ENCODE measurements at regions of chr7 and their contacts with region 1.

Region 1: GRCh38 chr7:73865738-73866445 is 4.9 kb downstream of the TMEM270 start:
- DNase-seq: peak in 3 of 4 experiments; percentile 53 to 71 (median 61)
- ATAC-seq: peak; percentile 83
- H3K4me3 ChIP-seq: no peak overlapping the region
- H3K27ac ChIP-seq: no peak overlapping the region
- H3K4me1 ChIP-seq: peaks cover 0 to 16% of the 10 kb centered on the region in 2 experiments; a peak in 3 of 5 replicates
- H3K27me3 ChIP-seq: peaks cover 9 to 51% of the 10 kb centered on the region in 2 experiments; a peak in 3 of 5 replicates
- CTCF ChIP-seq: peak; percentile 72 to 94 (median 79)
- EP300 ChIP-seq: no peak
- POLR2A ChIP-seq: no peak
- RAD21 ChIP-seq: peak; percentile 84

Region 2: GRCh38 chr7:73879977-73880681 is 14.2 kb after region 1 on chr7:
- CTCF ChIA-PET with region 1: interaction called, 3 read pairs
- POLR2A ChIA-PET with region 1: interaction called, 15 read pairs
- in situ Hi-C with region 1: no loop called
- intact Hi-C with region 1: no loop called
- DNase-seq: no peak
- ATAC-seq: peak; percentile 50
- H3K4me3 ChIP-seq: no peak overlapping the region
- H3K27ac ChIP-seq: no peak overlapping the region
- H3K4me1 ChIP-seq: peaks cover 0 to 9% of the 10 kb centered on the region in 2 experiments; a peak in 1 of 5 replicates
- H3K27me3 ChIP-seq: peaks cover 21 to 63% of the 10 kb centered on the region in 2 experiments
- CTCF ChIP-seq: no peak
- EP300 ChIP-seq: no peak
- POLR2A ChIP-seq: no peak
- RAD21 ChIP-seq: no peak

Region 3: GRCh38 chr7:73978661-73979563 is 113.0 kb after region 1 on chr7:
- CTCF ChIA-PET with region 1: interaction called, 5 read pairs
- POLR2A ChIA-PET with region 1: no interaction called
- in situ Hi-C with region 1: no loop called
- intact Hi-C with region 1: loop called (anchors 1 kb)
- DNase-seq: peak; percentile 64 to 76 (median 74)
- ATAC-seq: peak; percentile 90
- H3K4me3 ChIP-seq: no peak overlapping the region
- H3K27ac ChIP-seq: no peak overlapping the region
- H3K4me1 ChIP-seq: peaks cover 2 to 10% of the 10 kb centered on the region in 2 experiments; a peak in 3 of 5 replicates
- H3K27me3 ChIP-seq: peaks cover 36 to 77% of the 10 kb centered on the region in 2 experiments
- CTCF ChIP-seq: peak; percentile 69 to 81 (median 70)
- EP300 ChIP-seq: no peak
- POLR2A ChIP-seq: no peak
- RAD21 ChIP-seq: peak; percentile 52 to 69

Region 4: GRCh38 chr7:74017125-74017524 is 151.2 kb after region 1 on chr7:
- CTCF ChIA-PET with region 1: no interaction called
- POLR2A ChIA-PET with region 1: no interaction called
- in situ Hi-C with region 1: no loop called
- intact Hi-C with region 1: loop called (anchors 5 kb)
- DNase-seq: no peak
- ATAC-seq: no peak
- H3K4me3 ChIP-seq: no peak overlapping the region
- H3K27ac ChIP-seq: no peak overlapping the region
- H3K4me1 ChIP-seq: peaks cover 0 to 19% of the 10 kb centered on the region in 2 experiments; a peak in 2 of 5 replicates
- H3K27me3 ChIP-seq: peaks cover 25 to 71% of the 10 kb centered on the region in 2 experiments
- CTCF ChIP-seq: no peak
- EP300 ChIP-seq: no peak
- POLR2A ChIP-seq: no peak
- RAD21 ChIP-seq: no peak

Region 5: DNA sequence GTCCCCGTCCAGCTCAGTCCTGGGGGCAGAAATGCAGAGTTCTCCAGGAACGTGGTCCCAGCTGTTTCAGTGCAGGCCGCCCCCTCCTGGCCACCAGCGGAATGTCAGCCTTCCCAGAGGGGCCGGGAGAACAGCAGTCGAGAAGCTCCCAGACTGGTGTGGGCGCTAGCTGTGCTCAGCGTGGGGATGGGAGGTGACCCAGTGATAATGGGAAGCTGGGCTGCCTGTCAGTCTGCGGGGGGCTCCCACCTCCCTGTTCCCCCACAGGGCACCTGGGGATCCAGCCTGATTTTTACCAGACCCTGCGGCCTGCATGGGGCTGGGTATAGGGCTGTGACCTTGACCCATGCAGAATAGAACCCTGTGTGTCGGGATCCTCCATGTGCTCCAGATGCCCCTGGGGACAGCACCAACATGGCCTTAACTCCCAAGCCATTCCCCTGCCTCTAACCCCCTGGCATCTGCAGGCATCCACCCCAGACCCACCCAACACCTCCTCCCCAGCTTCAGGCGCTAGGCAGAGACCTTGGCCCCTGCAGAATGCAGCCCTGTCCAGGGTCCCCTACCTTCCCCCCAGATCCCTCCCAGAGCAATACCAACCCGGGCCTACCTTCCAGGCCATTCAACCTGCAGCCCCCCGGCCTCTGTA is 161.1 kb after region 1 on chr7:
- CTCF ChIA-PET with region 1: interaction called, 16 read pairs
- POLR2A ChIA-PET with region 1: interaction called, 3 read pairs
- in situ Hi-C with region 1: no loop called
- intact Hi-C with region 1: loop called (anchors 1 kb)
- DNase-seq: peak; percentile 77 to 88 (median 85)
- ATAC-seq: peak; percentile 93
- H3K4me3 ChIP-seq: no peak overlapping the region
- H3K27ac ChIP-seq: no peak overlapping the region
- H3K4me1 ChIP-seq: peaks cover 0 to 19% of the 10 kb centered on the region in 2 experiments; a peak in 1 of 5 replicates
- H3K27me3 ChIP-seq: peaks cover 62 to 80% of the 10 kb centered on the region in 2 experiments
- CTCF ChIP-seq: peak; percentile 91 to 97 (median 92)
- EP300 ChIP-seq: 0 out of 2 replicates have a peak, but pooled peaks have one; percentile 6
- POLR2A ChIP-seq: no peak
- RAD21 ChIP-seq: peak; percentile 63 to 79

Region 6: GRCh38 chr7:74206589-74207120 is 340.8 kb after region 1 on chr7:
- CTCF ChIA-PET with region 1: no interaction called
- POLR2A ChIA-PET with region 1: no interaction called
- in situ Hi-C with region 1: loop called (anchors 10 kb)
- intact Hi-C with region 1: loop called (anchors 2 kb)
- DNase-seq: peak; percentile 84 to 90 (median 86)
- ATAC-seq: peak; percentile 86
- H3K4me3 ChIP-seq: no peak overlapping the region
- H3K27ac ChIP-seq: no peak overlapping the region
- H3K4me1 ChIP-seq: peaks cover 3 to 28% of the 10 kb centered on the region in 2 experiments; a peak in 4 of 5 replicates
- H3K27me3 ChIP-seq: no peaks in the 10 kb centered on the region; a peak in 1 of 5 replicates
- CTCF ChIP-seq: peak; percentile 95 to 99 (median 97)
- EP300 ChIP-seq: no peak
- POLR2A ChIP-seq: no peak
- RAD21 ChIP-seq: peak; percentile 96 to 98

Region 7: GRCh38 chr7:74387606-74388005 is 521.7 kb after region 1 on chr7:
- CTCF ChIA-PET with region 1: no interaction called
- POLR2A ChIA-PET with region 1: no interaction called
- in situ Hi-C with region 1: loop called (anchors 5 kb)
- intact Hi-C with region 1: loop called (anchors 2 kb)
- DNase-seq: no peak
- ATAC-seq: no peak
- H3K4me3 ChIP-seq: no peak overlapping the region
- H3K27ac ChIP-seq: no peak overlapping the region
- H3K4me1 ChIP-seq: peaks cover 0 to 4% of the 10 kb centered on the region in 2 experiments; a peak in 2 of 5 replicates
- H3K27me3 ChIP-seq: peaks cover 0 to 23% of the 10 kb centered on the region in 2 experiments; a peak in 2 of 5 replicates
- CTCF ChIP-seq: no peak
- EP300 ChIP-seq: no peak
- POLR2A ChIP-seq: no peak
- RAD21 ChIP-seq: no peak